ENCODE measurements at regions of chr3 and their contacts with region 1.

Region 1: GRCh38 chr3:95615592-95616310 is 1198.6 kb upstream of the EPHA6 start:
- DNase-seq: peak; percentile 81
- ATAC-seq: peak; percentile 79
- H3K4me3 ChIP-seq: no peak overlapping the region
- H3K27ac ChIP-seq: peak overlapping the region; percentile 73
- H3K4me1 ChIP-seq: peaks cover 40% of the 10 kb centered on the region
- H3K27me3 ChIP-seq: no peaks in the 10 kb centered on the region
- CTCF ChIP-seq: no peak

Region 2: DNA sequence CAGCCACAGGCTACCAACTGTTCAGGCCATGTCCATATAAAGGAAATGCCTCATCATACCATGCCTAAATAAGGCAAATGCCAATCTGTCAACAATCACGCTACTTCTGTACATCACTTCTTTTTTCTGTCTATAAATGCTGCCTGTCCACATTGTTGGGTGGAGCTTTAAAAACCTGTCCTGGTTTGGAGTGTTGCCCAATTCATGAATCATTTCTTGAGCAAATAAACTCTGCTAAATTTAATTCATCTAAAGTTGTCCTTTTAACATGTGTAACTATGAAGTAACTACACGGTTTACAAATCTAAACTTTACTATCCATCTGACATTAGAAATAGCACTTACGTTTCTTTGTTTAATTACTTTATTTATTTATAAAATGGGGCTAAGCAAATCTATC is 460.9 kb before region 1 on chr3:
- CTCF ChIA-PET with region 1: no interaction called
- POLR2A ChIA-PET with region 1: no interaction called
- intact Hi-C with region 1: loop called (anchors 10 kb)
- DNase-seq: peak; percentile 98
- ATAC-seq: peak; percentile 99
- H3K4me3 ChIP-seq: no peak overlapping the region
- H3K27ac ChIP-seq: peak overlapping the region; percentile 34; the same call in 1 of the 2 replicates
- H3K4me1 ChIP-seq: peaks cover 14% of the 10 kb centered on the region
- H3K27me3 ChIP-seq: no peaks in the 10 kb centered on the region
- CTCF ChIP-seq: no peak

Region 3: GRCh38 chr3:95254771-95255170 is 361.0 kb before region 1 on chr3:
- CTCF ChIA-PET with region 1: no interaction called
- POLR2A ChIA-PET with region 1: no interaction called
- intact Hi-C with region 1: loop called (anchors 10 kb)
- DNase-seq: peak; percentile 14
- ATAC-seq: peak; percentile 37
- H3K4me3 ChIP-seq: no peak overlapping the region
- H3K27ac ChIP-seq: peak overlapping the region; percentile 20; the same call in 1 of the 2 replicates
- H3K4me1 ChIP-seq: no peaks in the 10 kb centered on the region
- H3K27me3 ChIP-seq: no peaks in the 10 kb centered on the region
- CTCF ChIP-seq: no peak

Region 4: GRCh38 chr3:95654570-95655362 is 39.0 kb after region 1 on chr3:
- CTCF ChIA-PET with region 1: no interaction called
- POLR2A ChIA-PET with region 1: no interaction called
- intact Hi-C with region 1: no loop called
- DNase-seq: no peak
- ATAC-seq: no peak
- H3K4me3 ChIP-seq: no peak overlapping the region
- H3K27ac ChIP-seq: no peak overlapping the region
- H3K4me1 ChIP-seq: no peaks in the 10 kb centered on the region
- H3K27me3 ChIP-seq: no peaks in the 10 kb centered on the region
- CTCF ChIP-seq: no peak

Region 5: DNA sequence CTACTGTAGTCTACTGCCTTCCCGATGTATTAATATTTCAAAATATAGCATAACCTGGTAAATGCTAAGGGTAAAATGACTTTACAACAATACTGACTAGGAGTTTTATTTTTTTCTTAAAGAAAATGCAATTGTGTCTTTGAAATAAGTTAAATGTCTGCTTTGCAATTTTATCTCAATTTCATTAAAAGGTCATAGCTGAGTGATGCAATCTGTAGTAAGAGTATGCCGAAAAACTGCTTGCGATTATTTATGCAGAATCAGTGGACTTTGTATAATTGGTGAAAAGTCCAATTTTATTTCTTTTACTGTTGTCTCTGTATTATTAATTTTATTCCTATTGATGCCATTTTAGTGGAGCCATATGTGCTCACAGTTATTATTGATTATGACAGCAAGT is 55.0 kb after region 1 on chr3:
- CTCF ChIA-PET with region 1: no interaction called
- POLR2A ChIA-PET with region 1: no interaction called
- intact Hi-C with region 1: no loop called
- DNase-seq: no peak
- ATAC-seq: no peak
- H3K4me3 ChIP-seq: no peak overlapping the region
- H3K27ac ChIP-seq: no peak overlapping the region
- H3K4me1 ChIP-seq: no peaks in the 10 kb centered on the region
- H3K27me3 ChIP-seq: no peaks in the 10 kb centered on the region
- CTCF ChIP-seq: no peak

Region 6: GRCh38 chr3:95905182-95905581 is 289.4 kb after region 1 on chr3:
- CTCF ChIA-PET with region 1: no interaction called
- POLR2A ChIA-PET with region 1: no interaction called
- intact Hi-C with region 1: loop called (anchors 5 kb)
- DNase-seq: peak; percentile 23
- ATAC-seq: peak; percentile 77
- H3K4me3 ChIP-seq: no peak overlapping the region
- H3K27ac ChIP-seq: no peak overlapping the region
- H3K4me1 ChIP-seq: 0 out of 2 replicates have a peak, but pooled peaks cover 5% of the 10 kb centered on the region
- H3K27me3 ChIP-seq: no peaks in the 10 kb centered on the region
- CTCF ChIP-seq: no peak

Measured in PC-3 (cell line).